CD14-positive monocyte (primary cell): ENCODE measurements at regions of chr5 and their contacts with region 1.

Region 1: DNA sequence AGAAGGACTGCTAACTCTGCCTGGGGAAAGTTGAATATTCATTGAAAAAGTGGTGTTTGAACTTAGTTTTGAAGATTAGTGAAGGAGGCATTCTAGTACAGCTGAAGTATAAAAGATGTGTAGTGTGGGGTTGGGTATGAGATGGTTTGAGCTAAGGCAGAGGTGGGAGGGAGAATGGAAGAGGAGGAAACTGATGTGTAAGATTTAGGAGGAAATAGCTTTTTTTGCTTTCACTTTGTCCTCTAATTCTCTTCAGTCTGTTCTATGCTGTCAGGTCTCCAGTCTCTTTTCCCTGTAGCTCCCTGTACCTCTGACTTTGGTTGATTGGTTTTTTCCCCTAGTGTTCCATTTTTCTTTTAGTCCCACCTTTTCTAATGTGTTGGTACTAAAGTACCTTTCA is 9.0 kb downstream of the CREBRF start:
- DNase-seq: no peak
- H3K4me3 ChIP-seq: no peak overlapping the region
- H3K4me3 Mint-ChIP-seq: peak overlapping the region in 1 of 2 donors; percentile 72
- H3K27ac ChIP-seq: peak overlapping the region in 1 of 2 donors; percentile 10
- H3K27ac Mint-ChIP-seq: peak overlapping the region in 6 of 7 donors; percentile 56 to 81 (median 77)
- H3K4me1 ChIP-seq: peaks cover 21 to 22% of the 10 kb centered on the region in 2 donors
- H3K4me1 Mint-ChIP-seq: peaks cover 36% of the 10 kb centered on the region
- H3K27me3 ChIP-seq: no peaks in the 10 kb centered on the region
- H3K27me3 Mint-ChIP-seq: no peaks in the 10 kb centered on the region
- CTCF ChIP-seq: no peak

Region 2: DNA sequence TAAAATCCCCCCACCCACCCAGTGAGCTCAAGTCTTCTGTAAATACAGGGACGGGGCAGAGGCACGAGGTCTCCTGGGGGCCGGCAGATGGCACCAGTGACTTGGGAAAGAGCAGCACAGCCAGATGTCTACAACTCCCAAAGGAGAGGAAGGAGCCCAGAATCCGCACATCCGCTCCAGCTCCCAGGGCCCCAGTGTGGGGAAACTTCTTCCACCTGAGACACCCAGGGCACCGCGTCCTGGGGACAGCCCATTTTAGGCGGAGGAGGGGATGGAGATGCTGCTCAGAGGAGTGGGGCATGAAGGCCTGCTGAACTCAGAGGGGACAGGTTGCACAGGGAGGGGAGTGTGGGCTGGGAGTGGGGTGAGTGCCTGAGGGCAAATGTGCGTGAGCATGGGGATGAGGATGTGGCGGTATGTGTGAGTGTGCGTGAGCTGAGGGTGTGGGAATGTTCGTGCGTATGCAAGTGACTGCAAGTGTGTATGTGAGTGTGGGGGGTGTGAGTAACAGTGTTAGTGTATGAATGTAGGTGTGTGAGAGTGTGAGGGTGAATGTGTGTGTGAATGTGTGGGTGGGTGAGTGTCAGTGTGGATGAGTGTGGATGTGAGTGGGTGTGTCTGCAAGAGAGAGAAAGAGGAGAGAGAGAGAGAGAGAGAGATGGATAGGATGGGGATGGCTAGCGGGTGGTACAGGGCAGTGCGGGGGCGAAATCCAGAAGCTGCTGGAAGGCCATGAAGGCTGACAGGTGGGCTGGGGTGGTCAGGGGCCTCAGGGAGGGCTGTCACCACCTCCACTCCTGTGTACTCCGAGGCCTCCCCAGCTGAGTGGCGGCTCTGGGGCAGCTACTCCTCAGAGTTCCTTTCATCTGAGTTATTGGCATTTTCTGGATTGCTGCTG is 357.6 kb before region 1 on chr5:
- intact Hi-C with region 1: loop called in 1 of 2 experiments (anchors 10 kb)
- DNase-seq: no peak
- H3K4me3 ChIP-seq: no peak overlapping the region
- H3K4me3 Mint-ChIP-seq: no peak overlapping the region
- H3K27ac ChIP-seq: no peak overlapping the region
- H3K27ac Mint-ChIP-seq: no peak overlapping the region
- H3K4me1 ChIP-seq: no peaks in the 10 kb centered on the region
- H3K4me1 Mint-ChIP-seq: no peaks in the 10 kb centered on the region
- H3K27me3 ChIP-seq: peaks cover 0 to 5% of the 10 kb centered on the region in 2 donors
- H3K27me3 Mint-ChIP-seq: peaks cover 15 to 22% (median 20%) of the 10 kb centered on the region in 3 donors
- CTCF ChIP-seq: peak; percentile 8

Region 3: GRCh38 chr5:173051746-173052145 is 13.4 kb before region 1 on chr5:
- intact Hi-C with region 1: no loop called
- DNase-seq: no peak
- H3K4me3 ChIP-seq: no peak overlapping the region
- H3K4me3 Mint-ChIP-seq: no peak overlapping the region
- H3K27ac ChIP-seq: no peak overlapping the region
- H3K27ac Mint-ChIP-seq: no peak overlapping the region
- H3K4me1 ChIP-seq: peaks cover 14 to 15% of the 10 kb centered on the region in 2 donors
- H3K4me1 Mint-ChIP-seq: peaks cover 16% of the 10 kb centered on the region
- H3K27me3 ChIP-seq: no peaks in the 10 kb centered on the region
- H3K27me3 Mint-ChIP-seq: peaks cover 1 to 7% (median 3%) of the 10 kb centered on the region in 3 donors
- CTCF ChIP-seq: no peak